Calu3 (cell line): ENCODE measurements at regions of chr2 and their contacts with region 1.

Region 1: GRCh38 chr2:26846328-26847306 is 1.3 kb upstream of the DPYSL5 start:
- DNase-seq: peak; percentile 72
- H3K4me3 Mint-ChIP-seq: no peak overlapping the region
- H3K27ac Mint-ChIP-seq: no peak overlapping the region
- H3K4me1 Mint-ChIP-seq: no peaks in the 10 kb centered on the region
- H3K27me3 Mint-ChIP-seq: peaks cover 78% of the 10 kb centered on the region
- CTCF ChIP-seq: peak; percentile 61

Region 2: DNA sequence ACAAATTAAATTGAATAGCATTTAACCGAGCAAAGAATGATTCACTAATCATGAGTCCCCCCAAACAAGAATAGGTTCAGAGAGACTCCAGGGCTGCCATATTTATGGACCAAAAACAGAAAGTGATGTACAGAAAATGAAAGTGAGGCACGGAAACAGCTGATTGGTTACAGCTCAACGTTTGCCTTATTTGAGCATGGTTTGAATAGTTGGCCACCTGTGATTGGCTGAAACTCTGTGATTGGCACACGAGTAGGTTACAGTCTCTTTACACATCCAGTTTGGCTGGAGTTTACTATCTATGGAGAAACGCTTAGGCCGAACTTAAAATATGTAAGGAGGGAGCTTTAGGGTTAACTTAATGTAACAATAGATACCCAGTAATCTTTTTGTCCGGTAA is 25.7 kb before region 1 on chr2:
- CTCF ChIA-PET with region 1: no interaction called
- intact Hi-C with region 1: no loop called
- DNase-seq: no peak
- H3K4me3 Mint-ChIP-seq: no peak overlapping the region
- H3K27ac Mint-ChIP-seq: no peak overlapping the region
- H3K4me1 Mint-ChIP-seq: no peaks in the 10 kb centered on the region
- H3K27me3 Mint-ChIP-seq: peaks cover 45% of the 10 kb centered on the region
- CTCF ChIP-seq: no peak

Region 3: GRCh38 chr2:26922405-26923188 is 76.0 kb after region 1 on chr2:
- CTCF ChIA-PET with region 1: interaction called, 36 read pairs
- intact Hi-C with region 1: loop called (anchors 1 kb)
- DNase-seq: peak; percentile 61
- H3K4me3 Mint-ChIP-seq: no peak overlapping the region
- H3K27ac Mint-ChIP-seq: no peak overlapping the region
- H3K4me1 Mint-ChIP-seq: no peaks in the 10 kb centered on the region
- H3K27me3 Mint-ChIP-seq: peaks cover 36% of the 10 kb centered on the region
- CTCF ChIP-seq: peak; percentile 42

Region 4: GRCh38 chr2:26942543-26943295 is 96.1 kb after region 1 on chr2:
- CTCF ChIA-PET with region 1: interaction called, 15 read pairs
- intact Hi-C with region 1: loop called (anchors 2 kb)
- DNase-seq: peak; percentile 69
- H3K4me3 Mint-ChIP-seq: no peak overlapping the region
- H3K27ac Mint-ChIP-seq: no peak overlapping the region
- H3K4me1 Mint-ChIP-seq: no peaks in the 10 kb centered on the region
- H3K27me3 Mint-ChIP-seq: peaks cover 74% of the 10 kb centered on the region
- CTCF ChIP-seq: peak; percentile 76

Region 5: GRCh38 chr2:27016801-27017325 is 170.2 kb after region 1 on chr2:
- CTCF ChIA-PET with region 1: interaction called, 34 read pairs
- intact Hi-C with region 1: loop called (anchors 5 kb)
- DNase-seq: peak; percentile 70
- H3K4me3 Mint-ChIP-seq: no peak overlapping the region
- H3K27ac Mint-ChIP-seq: no peak overlapping the region
- H3K4me1 Mint-ChIP-seq: peaks cover 37% of the 10 kb centered on the region
- H3K27me3 Mint-ChIP-seq: no peaks in the 10 kb centered on the region
- CTCF ChIP-seq: peak; percentile 83